ENCODE measurements at regions of chr12 and their contacts with region 1.

Region 1: GRCh38 chr12:46661110-46661845 is 164.5 kb downstream of the SLC38A4 start:
- DNase-seq: no peak
- H3K4me3 ChIP-seq: no peak overlapping the region
- H3K27ac ChIP-seq: peak overlapping the region; percentile 61 to 68 (median 66)
- H3K4me1 ChIP-seq: peaks cover 0 to 36% (median 20%) of the 10 kb centered on the region in 4 donors
- H3K27me3 ChIP-seq: no peaks in the 10 kb centered on the region
- CTCF ChIP-seq: peak; percentile 75 to 87 (median 77)
- EP300 ChIP-seq: no peak
- POLR2A ChIP-seq: no peak

Region 2: DNA sequence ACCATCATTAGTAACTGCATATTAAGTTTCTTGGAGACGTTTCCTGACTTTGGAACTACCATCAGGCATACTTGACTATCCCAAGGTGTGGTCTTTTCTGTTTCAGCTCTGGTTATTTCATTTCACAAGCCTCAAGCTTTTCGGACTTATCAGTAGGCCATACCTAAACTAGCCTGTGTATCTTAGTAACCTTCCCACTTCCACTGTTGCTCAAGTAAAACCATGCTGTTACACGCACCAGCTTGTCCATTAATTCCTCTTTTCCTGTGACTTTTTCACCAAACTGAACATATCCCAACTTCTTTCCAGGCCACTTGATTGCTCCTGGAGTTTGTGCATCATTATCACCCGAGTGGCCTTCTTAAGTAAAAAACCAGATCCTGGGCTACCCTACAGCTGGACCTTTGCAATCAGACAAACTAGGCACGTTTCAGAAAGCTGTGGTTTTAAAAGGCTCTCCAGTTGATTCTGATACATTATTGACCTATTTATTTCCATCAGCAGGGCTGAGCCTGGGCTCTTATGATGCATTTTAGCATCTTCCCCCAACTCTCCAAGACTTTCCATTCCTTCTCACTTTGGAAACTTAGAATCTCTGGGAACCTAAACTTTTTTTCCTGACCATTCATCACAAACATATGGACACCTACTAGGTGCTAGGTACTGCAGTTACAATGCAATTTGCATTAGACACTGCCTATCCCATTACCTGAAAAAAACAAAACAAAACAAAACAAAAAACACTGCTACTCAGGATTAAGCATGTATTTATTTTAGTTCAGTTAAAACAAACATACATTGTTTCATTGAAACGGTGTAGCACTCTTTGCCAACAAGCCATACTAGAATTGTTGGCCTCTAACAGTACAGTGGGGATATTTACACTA is 303.6 kb before region 1 on chr12:
- in situ Hi-C with region 1: loop called (anchors 10 to 25 kb)
- intact Hi-C with region 1: no loop called
- DNase-seq: no peak
- H3K4me3 ChIP-seq: no peak overlapping the region
- H3K27ac ChIP-seq: no peak overlapping the region
- H3K4me1 ChIP-seq: peaks cover 0 to 22% (median 2%) of the 10 kb centered on the region in 4 donors
- H3K27me3 ChIP-seq: no peaks in the 10 kb centered on the region
- CTCF ChIP-seq: no peak
- EP300 ChIP-seq: no peak
- POLR2A ChIP-seq: no peak

Region 3: DNA sequence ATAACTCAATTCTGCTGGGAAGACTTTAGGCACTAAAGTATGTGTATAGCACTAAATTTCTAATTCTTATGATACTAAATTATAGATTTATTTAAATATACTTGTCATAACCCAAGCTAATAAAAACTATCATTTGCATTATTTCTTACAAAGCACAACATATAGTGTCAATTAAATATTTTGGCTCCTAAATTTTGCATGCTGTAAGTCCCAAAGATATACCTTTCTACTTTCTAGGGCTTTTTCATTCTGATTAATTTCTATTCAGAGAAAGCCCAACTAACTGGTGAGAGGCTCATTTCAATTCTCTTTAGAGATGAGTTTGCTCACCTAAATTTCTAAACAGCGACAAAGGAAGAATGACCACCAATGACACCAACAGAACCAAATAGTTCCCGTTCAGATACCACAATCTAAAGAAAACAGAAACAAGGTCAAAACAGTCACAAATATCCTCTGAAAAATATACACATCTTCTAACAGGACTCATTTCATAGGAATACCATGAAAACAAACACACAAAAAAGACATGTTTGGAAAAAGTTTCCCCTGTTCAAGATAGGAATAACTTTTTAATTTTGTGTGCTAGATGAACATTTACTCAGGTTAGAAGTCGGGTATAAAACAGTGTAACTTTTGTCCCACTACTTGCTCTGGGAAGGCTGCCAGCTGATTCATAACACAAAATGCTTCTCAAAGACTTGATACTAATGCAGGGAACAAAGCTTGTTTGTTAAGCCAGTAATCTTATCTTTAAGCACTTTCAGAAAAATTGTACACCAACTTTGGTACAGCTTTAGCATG is 296.3 kb before region 1 on chr12:
- in situ Hi-C with region 1: loop called in 2 of 4 experiments (anchors 10 to 25 kb)
- intact Hi-C with region 1: loop called (anchors 5 kb)
- DNase-seq: peak; percentile 71
- H3K4me3 ChIP-seq: peak overlapping the region in 1 of 4 donors; percentile 99
- H3K27ac ChIP-seq: peak overlapping the region; percentile 47 to 99 (median 52)
- H3K4me1 ChIP-seq: peaks cover 56 to 95% (median 61%) of the 10 kb centered on the region in 4 donors
- H3K27me3 ChIP-seq: no peaks in the 10 kb centered on the region
- CTCF ChIP-seq: no peak
- EP300 ChIP-seq: no peak
- POLR2A ChIP-seq: no peak

Region 4: GRCh38 chr12:46372544-46373110 is 288.7 kb before region 1 on chr12 and contains the start of gene SLC38A2:
- in situ Hi-C with region 1: loop called in 2 of 4 experiments (anchors 10 to 25 kb)
- intact Hi-C with region 1: loop called (anchors 5 kb)
- DNase-seq: peak; percentile 99
- H3K4me3 ChIP-seq: peak within 1 kb of the TSS; percentile 96 to 99 (median 98)
- H3K27ac ChIP-seq: peak within 1 kb of the TSS; percentile 99 to 100 (median 100)
- H3K4me1 ChIP-seq: peaks cover 23 to 40% (median 32%) of the 10 kb centered on the region in 4 donors
- H3K27me3 ChIP-seq: no peaks in the 10 kb centered on the region
- CTCF ChIP-seq: no peak
- EP300 ChIP-seq: no peak
- POLR2A ChIP-seq: peak; percentile 100
- total RNA-seq, gene SLC38A2: 104 to 300 (median 229) TPM

Region 5: DNA sequence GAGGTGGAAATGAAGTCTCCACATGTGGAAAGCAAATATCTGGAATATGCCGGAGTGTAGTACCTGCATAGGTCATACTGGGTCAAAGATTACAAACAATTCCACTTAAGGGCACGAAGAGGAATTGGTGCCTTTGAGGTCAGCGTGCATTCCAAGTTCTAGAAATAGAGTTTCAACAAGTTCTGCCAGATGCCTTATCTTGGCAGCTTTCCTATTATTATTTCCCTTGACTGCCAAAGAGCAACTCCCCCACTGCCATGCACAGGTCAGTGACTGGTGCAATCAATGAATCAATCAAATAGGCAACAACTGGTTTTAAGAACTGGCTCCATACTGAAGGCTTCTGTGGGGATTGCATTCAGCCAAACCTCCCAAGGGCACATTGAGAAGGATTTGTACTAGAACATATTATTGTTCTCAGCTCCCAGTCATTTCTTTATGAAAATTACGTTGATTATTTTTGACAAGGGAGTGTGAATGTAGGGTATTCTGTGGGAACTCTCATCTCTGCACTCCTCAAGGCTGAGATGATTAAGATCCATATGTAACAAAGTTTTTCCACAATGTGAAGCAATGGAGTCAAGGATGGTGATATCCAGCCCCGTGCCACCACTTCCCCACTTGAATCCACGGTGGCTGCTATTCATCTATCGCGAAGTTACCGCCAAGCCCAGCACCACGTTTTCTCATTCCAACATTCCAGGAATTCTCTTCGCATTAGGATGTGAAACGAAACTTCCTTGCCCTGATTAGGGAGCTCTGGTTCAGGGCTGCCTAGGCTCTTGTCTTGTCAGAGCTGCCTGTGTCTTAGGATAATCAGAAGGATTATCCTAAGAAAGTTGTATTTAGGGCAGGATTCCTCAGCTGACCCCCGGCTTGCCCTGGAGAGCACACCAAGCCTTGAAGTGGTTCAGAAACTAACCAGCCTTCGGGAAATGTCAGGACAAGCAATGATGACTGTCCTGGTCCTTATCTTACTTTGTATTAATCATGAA is 303.0 kb after region 1 on chr12:
- in situ Hi-C with region 1: no loop called
- intact Hi-C with region 1: no loop called
- DNase-seq: no peak
- H3K4me3 ChIP-seq: no peak overlapping the region
- H3K27ac ChIP-seq: peak overlapping the region in 2 of 4 donors; percentile 8 to 52
- H3K4me1 ChIP-seq: peaks cover 0 to 2% (median 0%) of the 10 kb centered on the region in 4 donors
- H3K27me3 ChIP-seq: no peaks in the 10 kb centered on the region
- CTCF ChIP-seq: no peak
- EP300 ChIP-seq: no peak
- POLR2A ChIP-seq: no peak

Measured in transverse colon (tissue), 4 donors.